Calu3 (cell line): ENCODE measurements at regions of chr2 and their contacts with region 1.

Region 1: DNA sequence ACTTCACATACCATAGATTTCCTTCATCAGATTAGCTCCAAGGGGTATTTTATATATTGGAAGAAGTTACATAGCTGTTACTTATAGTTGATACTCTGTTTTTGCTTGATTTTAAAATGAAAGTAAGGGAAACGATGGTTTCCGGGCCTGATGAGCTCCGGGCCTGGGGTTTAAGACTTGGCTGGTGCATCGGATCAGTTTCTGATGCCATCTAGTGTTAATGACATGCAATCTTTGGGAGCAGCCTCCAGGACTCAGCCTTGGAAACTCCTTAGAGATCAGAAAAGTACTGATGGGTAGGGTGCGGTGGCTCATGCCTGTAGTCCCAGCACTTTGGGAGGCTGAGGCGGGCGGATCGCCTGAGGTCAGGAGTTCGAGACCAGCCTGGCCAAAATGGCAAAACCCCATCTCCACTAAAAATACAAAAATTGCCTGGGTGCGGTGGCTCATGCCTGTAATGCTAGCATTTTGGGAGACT is 47.1 kb upstream of the CNOT11 start:
- DNase-seq: peak; percentile 62
- H3K4me3 Mint-ChIP-seq: no peak overlapping the region
- H3K27ac Mint-ChIP-seq: peak overlapping the region; percentile 42
- H3K4me1 Mint-ChIP-seq: peaks cover 7% of the 10 kb centered on the region
- H3K27me3 Mint-ChIP-seq: no peaks in the 10 kb centered on the region
- CTCF ChIP-seq: peak; percentile 32

Region 2: DNA sequence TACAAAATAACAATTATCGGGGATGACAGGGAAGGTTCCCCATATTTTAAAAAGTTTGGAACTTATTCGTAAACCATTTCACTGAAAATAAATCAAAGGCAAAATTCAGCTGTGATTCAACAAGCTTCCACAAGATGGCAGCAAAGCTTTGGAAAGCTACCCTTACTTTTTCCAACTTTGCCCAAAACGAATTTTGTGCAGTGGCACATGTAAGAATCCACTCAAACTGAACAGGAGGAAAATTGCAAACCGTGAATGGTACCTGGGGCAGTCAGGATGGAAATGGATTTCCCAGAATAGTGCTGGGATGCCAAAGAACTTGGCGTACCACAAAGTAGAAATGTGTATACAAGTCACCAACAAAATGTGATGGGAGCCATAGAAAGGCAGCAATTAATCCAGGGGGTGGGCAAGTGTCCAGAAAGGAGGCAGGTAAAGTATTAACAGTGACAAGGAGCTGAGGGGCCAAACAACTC is 192.8 kb before region 1 on chr2:
- CTCF ChIA-PET with region 1: interaction called, 11 read pairs
- intact Hi-C with region 1: loop called (anchors 1 kb)
- DNase-seq: peak; percentile 32
- H3K4me3 Mint-ChIP-seq: no peak overlapping the region
- H3K27ac Mint-ChIP-seq: peak overlapping the region; percentile 57
- H3K4me1 Mint-ChIP-seq: peaks cover 21% of the 10 kb centered on the region
- H3K27me3 Mint-ChIP-seq: no peaks in the 10 kb centered on the region
- CTCF ChIP-seq: peak; percentile 61

Region 3: DNA sequence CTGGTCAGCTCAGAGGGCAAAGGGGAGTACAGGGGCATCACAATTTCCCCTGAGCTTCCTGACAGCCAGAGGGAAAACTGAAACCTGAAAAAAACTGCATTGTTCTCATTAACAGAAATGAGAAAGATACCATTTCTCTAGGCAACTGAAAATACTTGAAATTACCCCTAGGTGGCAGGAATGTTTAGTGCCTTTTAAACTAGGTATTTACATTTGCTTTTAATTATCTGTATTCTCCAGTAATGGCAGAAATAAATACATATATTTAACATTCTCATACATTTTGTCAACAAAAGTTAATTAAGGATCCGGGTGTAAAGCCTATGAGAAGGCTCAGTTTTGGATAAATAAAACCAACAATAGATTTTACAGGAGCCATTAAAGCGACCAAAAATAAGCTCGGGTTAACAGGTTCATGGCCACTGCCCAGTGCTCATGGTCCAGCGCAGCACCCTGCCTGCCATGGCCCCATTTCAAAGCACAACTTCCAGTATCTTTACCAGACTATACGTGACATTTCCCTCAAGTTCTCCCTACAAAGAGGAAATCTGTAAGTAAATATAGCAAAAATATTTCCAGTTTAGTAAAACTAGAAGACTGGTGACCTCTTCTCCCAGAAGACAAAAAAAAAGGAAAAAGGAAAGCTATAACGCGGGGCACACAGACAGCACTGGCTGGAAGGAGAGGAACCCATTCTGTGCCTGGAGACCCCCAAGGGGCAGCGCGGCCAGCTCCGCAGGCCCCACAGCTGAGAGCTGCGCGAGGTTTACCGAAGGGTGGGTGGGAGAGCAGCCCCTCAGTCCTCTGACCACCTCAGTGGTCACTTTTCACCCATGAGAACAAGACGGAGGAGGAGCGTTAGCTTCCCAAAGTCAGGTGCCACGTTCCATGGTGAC is 168.8 kb before region 1 on chr2:
- CTCF ChIA-PET with region 1: interaction called, 23 read pairs
- intact Hi-C with region 1: loop called (anchors 1 kb)
- DNase-seq: no peak
- H3K4me3 Mint-ChIP-seq: no peak overlapping the region
- H3K27ac Mint-ChIP-seq: no peak overlapping the region
- H3K4me1 Mint-ChIP-seq: peaks cover 10% of the 10 kb centered on the region
- H3K27me3 Mint-ChIP-seq: no peaks in the 10 kb centered on the region
- CTCF ChIP-seq: peak; percentile 52

Region 4: GRCh38 chr2:101151141-101151858 is 54.3 kb before region 1 on chr2 and contains the start of gene TBC1D8:
- CTCF ChIA-PET with region 1: interaction called, 7 read pairs
- intact Hi-C with region 1: loop called (anchors 5 kb)
- DNase-seq: peak; percentile 83
- H3K4me3 Mint-ChIP-seq: peak within 1 kb of the TSS; percentile 78
- H3K27ac Mint-ChIP-seq: peak within 1 kb of the TSS; percentile 29
- H3K4me1 Mint-ChIP-seq: peaks cover 44% of the 10 kb centered on the region
- H3K27me3 Mint-ChIP-seq: no peaks in the 10 kb centered on the region
- CTCF ChIP-seq: no peak
- total RNA-seq, gene TBC1D8: 17.0 and 25.3 TPM in 2 replicates

Region 5: DNA sequence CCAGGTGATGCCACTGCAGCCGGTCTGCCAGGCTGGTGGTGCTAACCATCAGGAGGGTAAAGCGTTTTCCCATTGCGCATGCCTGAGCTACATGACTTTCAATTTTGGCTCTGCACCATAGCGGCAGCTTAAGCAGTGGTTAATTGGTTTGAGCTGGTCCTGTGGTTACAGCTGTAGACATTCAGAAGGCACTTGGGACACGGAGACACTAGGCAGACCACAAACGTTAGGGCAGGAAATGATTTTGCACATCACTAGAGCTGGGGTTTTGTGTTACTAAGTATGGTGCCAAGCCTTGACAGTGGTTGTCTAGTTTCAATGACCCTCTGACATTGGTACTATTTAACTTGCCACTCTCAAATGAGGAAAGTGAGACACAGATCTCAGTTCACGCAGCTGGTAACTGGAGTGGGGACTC is 18.3 kb after region 1 on chr2:
- CTCF ChIA-PET with region 1: no interaction called
- intact Hi-C with region 1: no loop called
- DNase-seq: no peak
- H3K4me3 Mint-ChIP-seq: no peak overlapping the region
- H3K27ac Mint-ChIP-seq: no peak overlapping the region
- H3K4me1 Mint-ChIP-seq: no peaks in the 10 kb centered on the region
- H3K27me3 Mint-ChIP-seq: no peaks in the 10 kb centered on the region
- CTCF ChIP-seq: no peak

Region 6: GRCh38 chr2:101295895-101296294 is 90.3 kb after region 1 on chr2:
- CTCF ChIA-PET with region 1: no interaction called
- intact Hi-C with region 1: no loop called
- DNase-seq: no peak
- H3K4me3 Mint-ChIP-seq: no peak overlapping the region
- H3K27ac Mint-ChIP-seq: no peak overlapping the region
- H3K4me1 Mint-ChIP-seq: peaks cover 19% of the 10 kb centered on the region
- H3K27me3 Mint-ChIP-seq: no peaks in the 10 kb centered on the region
- CTCF ChIP-seq: no peak